PC-3 (cell line): ENCODE measurements at regions of chr3 and their contacts with region 1.

Region 1: DNA sequence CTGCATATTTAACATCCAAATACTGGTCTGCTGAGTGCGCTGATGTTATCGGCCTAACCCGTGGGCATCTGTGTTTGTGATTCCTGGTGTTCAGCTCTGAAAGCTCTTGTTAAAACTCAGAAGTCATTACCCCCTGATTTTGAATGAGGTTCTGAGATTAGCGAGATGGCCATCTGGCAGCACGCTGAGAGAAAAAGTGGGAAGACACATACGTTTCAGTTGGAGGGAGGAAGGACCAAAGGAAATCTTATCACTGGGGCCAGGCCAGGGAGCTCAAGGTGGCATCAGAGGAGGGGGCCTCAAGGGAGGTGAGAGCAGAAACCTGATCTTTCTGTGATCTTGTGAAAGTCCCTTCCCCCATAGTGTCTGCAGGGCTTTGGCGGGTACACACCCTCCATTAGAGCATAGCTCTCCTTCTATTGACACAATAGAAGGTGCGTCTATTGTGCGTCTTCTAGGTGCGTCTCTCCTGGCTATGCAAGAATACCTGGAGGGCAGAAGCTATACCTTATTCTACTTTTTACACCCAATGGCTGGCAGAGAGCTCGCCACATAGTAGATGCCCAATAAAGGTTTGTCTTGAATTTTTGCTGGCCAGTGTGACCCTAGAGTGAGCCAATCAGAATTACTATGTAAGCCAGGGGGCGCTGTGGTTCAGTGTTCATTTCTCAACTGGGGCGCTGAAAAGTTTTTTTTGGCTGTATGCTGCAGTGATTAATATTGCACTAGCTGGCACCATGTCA is 182.4 kb downstream of the SHQ1 start:
- DNase-seq: peak; percentile 73
- ATAC-seq: peak; percentile 60
- H3K4me3 ChIP-seq: no peak overlapping the region
- H3K27ac ChIP-seq: no peak overlapping the region
- H3K4me1 ChIP-seq: peaks cover 9% of the 10 kb centered on the region
- H3K27me3 ChIP-seq: no peaks in the 10 kb centered on the region
- CTCF ChIP-seq: peak; percentile 85

Region 2: GRCh38 chr3:72722930-72723726 is 57.3 kb after region 1 on chr3:
- CTCF ChIA-PET with region 1: interaction called, 3 read pairs
- POLR2A ChIA-PET with region 1: no interaction called
- intact Hi-C with region 1: loop called (anchors 5 kb)
- DNase-seq: peak; percentile 92
- ATAC-seq: peak; percentile 71
- H3K4me3 ChIP-seq: peak overlapping the region; percentile 6; the same call in 1 of the 2 replicates
- H3K27ac ChIP-seq: peak overlapping the region; percentile 96
- H3K4me1 ChIP-seq: peaks cover 25% of the 10 kb centered on the region
- H3K27me3 ChIP-seq: no peaks in the 10 kb centered on the region
- CTCF ChIP-seq: 0 out of 2 replicates have a peak, but pooled peaks have one; percentile 17

Region 3: GRCh38 chr3:72745146-72745999 is 79.5 kb after region 1 on chr3:
- CTCF ChIA-PET with region 1: no interaction called
- POLR2A ChIA-PET with region 1: interaction called, 3 read pairs
- intact Hi-C with region 1: loop called (anchors 5 kb)
- DNase-seq: peak; percentile 72
- ATAC-seq: peak; percentile 82
- H3K4me3 ChIP-seq: no peak overlapping the region
- H3K27ac ChIP-seq: peak overlapping the region; percentile 77
- H3K4me1 ChIP-seq: peaks cover 26% of the 10 kb centered on the region
- H3K27me3 ChIP-seq: no peaks in the 10 kb centered on the region
- CTCF ChIP-seq: no peak

Region 4: GRCh38 chr3:72891053-72891855 is 225.4 kb after region 1 on chr3:
- CTCF ChIA-PET with region 1: no interaction called
- POLR2A ChIA-PET with region 1: no interaction called
- intact Hi-C with region 1: no loop called
- DNase-seq: peak; percentile 71
- ATAC-seq: peak; percentile 7; the same call in 1 of the 2 replicates
- H3K4me3 ChIP-seq: peak overlapping the region; percentile 17; the same call in 1 of the 2 replicates
- H3K27ac ChIP-seq: peak overlapping the region; percentile 21
- H3K4me1 ChIP-seq: peaks cover 47% of the 10 kb centered on the region
- H3K27me3 ChIP-seq: no peaks in the 10 kb centered on the region
- CTCF ChIP-seq: no peak